HepG2 (cell line): ENCODE measurements at regions of chr3 and their contacts with region 1.

Region 1: DNA sequence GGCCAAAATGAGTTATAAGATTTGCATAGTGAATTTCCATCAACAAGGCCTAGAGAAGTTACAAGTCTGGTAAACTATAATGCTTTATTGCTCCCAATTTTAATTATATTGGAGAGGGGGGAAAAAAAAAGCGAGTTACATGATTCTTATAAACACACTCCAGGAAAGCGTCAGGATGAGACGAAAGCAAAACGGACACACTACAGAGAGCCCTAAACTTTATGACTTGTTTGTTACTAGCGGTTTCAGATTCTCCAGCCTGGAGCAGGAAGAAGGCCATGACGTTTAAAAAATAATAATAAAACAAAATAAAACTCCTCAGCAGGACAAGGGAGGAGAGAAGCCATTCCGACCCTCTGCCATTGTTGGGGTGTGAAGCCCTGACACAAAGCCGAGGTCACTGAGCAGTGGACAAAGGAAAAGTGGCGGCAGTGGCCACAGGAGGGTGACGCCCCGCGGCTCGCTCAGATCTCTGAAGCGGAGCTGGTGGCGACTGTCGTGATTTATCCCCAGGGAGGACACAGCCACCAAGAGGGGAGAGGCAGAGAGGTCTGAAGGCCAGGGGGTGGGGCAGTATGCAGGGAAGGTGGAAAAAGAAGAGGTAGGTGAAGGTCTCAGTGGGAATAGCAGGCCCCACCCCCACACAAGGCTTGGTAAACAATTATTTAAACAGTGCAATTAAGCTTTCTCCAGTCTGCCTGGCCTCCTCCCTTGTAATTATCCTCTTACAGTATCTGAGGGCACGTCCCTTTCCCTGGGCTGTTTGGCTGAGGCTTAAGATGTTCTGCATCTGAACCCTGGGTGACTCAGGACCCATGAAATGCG is 45.3 kb downstream of the ADAMTS9 start:
- DNase-seq: no peak
- ATAC-seq: no peak
- H3K4me3 ChIP-seq: no peak overlapping the region
- H3K27ac ChIP-seq: no peak overlapping the region
- H3K4me1 ChIP-seq: no peaks in the 10 kb centered on the region
- H3K27me3 ChIP-seq: no peaks in the 10 kb centered on the region
- CTCF ChIP-seq: no peak
- EP300 ChIP-seq: no peak
- POLR2A ChIP-seq: no peak
- RAD21 ChIP-seq: no peak

Region 2: GRCh38 chr3:64291345-64291744 is 351.2 kb before region 1 on chr3:
- CTCF ChIA-PET with region 1: no interaction called
- POLR2A ChIA-PET with region 1: no interaction called
- in situ Hi-C with region 1: no loop called
- intact Hi-C with region 1: no loop called
- DNase-seq: no peak
- ATAC-seq: no peak
- H3K4me3 ChIP-seq: no peak overlapping the region
- H3K27ac ChIP-seq: no peak overlapping the region
- H3K4me1 ChIP-seq: no peaks in the 10 kb centered on the region
- H3K27me3 ChIP-seq: 0 out of 5 replicates have a peak, but pooled peaks cover 0 to 3% of the 10 kb centered on the region in 2 experiments
- CTCF ChIP-seq: no peak
- EP300 ChIP-seq: no peak
- POLR2A ChIP-seq: no peak
- RAD21 ChIP-seq: no peak

Region 3: DNA sequence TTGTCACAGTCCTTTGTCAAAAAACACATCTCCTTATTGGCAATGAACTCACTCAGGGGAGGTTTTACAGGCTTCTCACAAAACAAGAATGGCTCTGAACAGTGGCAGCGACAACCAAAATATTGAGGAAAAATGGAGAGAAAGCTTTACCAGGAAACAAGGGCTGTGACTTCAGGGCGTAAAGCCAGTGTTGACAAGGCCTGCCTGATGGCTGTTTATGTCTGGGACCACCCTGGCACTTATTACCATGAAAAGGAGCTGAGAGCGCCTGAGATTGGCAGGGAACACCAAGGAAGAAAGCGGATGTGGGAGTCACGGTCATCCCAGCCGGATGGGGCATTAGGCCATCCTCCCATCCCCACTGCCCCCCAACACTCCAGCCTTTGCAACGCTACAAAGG is 66.2 kb before region 1 on chr3:
- CTCF ChIA-PET with region 1: no interaction called
- POLR2A ChIA-PET with region 1: no interaction called
- in situ Hi-C with region 1: no loop called
- intact Hi-C with region 1: loop called (anchors 2 kb)
- DNase-seq: no peak
- ATAC-seq: no peak
- H3K4me3 ChIP-seq: no peak overlapping the region
- H3K27ac ChIP-seq: no peak overlapping the region
- H3K4me1 ChIP-seq: no peaks in the 10 kb centered on the region
- H3K27me3 ChIP-seq: no peaks in the 10 kb centered on the region
- CTCF ChIP-seq: no peak
- EP300 ChIP-seq: no peak
- POLR2A ChIP-seq: no peak
- RAD21 ChIP-seq: no peak

Region 4: DNA sequence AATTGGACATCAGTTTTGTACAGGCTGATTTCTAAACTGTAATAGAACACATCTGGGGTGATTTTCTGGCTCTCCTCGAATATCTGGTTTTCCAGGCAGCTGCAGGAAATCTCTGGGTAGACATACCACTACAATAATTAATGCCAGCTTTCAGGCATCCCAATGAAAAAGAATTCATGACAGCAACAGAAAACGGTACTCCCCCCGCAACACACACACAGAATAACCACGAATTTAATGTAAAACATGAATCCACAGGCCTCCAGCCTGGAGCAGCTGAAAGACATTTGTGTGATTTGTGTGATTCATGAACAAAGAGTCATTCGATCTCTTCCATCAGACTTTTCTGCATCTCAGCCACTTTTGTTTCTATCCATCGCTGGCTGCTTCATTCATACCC is 1134.0 kb after region 1 on chr3:
- CTCF ChIA-PET with region 1: no interaction called
- POLR2A ChIA-PET with region 1: no interaction called
- in situ Hi-C with region 1: no loop called
- intact Hi-C with region 1: no loop called
- DNase-seq: no peak
- ATAC-seq: no peak
- H3K4me3 ChIP-seq: no peak overlapping the region
- H3K27ac ChIP-seq: no peak overlapping the region
- H3K4me1 ChIP-seq: no peaks in the 10 kb centered on the region
- H3K27me3 ChIP-seq: no peaks in the 10 kb centered on the region; a peak in 1 of 5 replicates
- CTCF ChIP-seq: no peak
- EP300 ChIP-seq: no peak
- POLR2A ChIP-seq: no peak
- RAD21 ChIP-seq: no peak